ENCODE measurements at regions of chr9 and their contacts with region 1.

Region 1: GRCh38 chr9:101398068-101398929 is at the starts of genes MRPL50 and ZNF189:
- DNase-seq: peak; percentile 81 to 99 (median 96)
- ATAC-seq: peak; percentile 97
- H3K4me3 ChIP-seq: peak within 1 kb of the TSS; percentile 90
- H3K4me3 Mint-ChIP-seq: peak within 1 kb of the TSS; percentile 93 to 100 (median 98)
- H3K27ac ChIP-seq: peak within 1 kb of the TSS; percentile 94
- H3K27ac Mint-ChIP-seq: peak within 1 kb of the TSS; percentile 97 to 100 (median 99)
- H3K4me1 ChIP-seq: peaks cover 21 to 34% of the 10 kb centered on the region in 2 donors
- H3K4me1 Mint-ChIP-seq: peaks cover 53 to 90% (median 83%) of the 10 kb centered on the region in 7 donors
- H3K27me3 ChIP-seq: no peaks in the 10 kb centered on the region
- H3K27me3 Mint-ChIP-seq: no peaks in the 10 kb centered on the region
- total RNA-seq, gene MRPL50: 6.5 to 23.8 (median 11.5) TPM
- total RNA-seq, gene ZNF189: 8.5 to 25.0 (median 14.5) TPM

Region 2: DNA sequence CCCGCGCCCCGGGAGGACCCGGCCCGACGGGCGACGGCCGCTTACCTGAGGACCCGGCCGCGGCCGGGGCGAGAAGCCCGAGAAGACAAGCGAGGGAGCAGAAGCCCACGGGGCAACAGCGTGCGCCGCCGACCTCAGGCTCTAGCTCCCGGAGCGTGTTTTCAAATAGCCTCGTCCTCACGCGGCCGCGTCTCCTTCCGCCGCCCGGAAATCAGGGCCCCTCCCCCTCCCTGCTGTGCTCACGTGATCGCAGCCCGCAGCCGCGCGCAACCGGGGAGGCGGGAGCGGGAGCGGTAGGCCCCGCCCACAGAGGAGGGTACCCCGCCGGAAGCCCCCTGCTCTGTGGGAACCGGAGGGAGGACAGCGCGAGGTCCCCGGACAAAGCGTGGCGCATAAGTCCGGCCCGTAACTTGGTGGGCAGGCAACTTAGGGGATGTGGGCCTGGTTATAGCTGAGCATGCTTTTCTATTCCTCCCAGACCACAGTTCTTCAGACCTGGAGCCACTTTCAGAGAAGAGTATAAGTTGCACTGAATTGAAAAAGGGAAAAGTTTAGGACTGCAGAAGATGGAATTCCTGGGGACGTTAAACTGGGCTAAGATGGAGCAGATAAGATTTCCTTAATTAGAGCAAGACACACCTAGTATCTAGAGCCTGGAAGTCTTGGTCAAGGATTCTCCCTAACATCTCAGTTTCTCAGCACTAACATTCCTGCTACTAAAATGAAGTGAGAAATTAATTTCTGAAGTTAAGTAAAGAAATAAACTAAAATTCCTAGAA is 1045.4 kb before region 1 on chr9 and contains the start of gene TEX10:
- CTCF ChIA-PET with region 1: no interaction called
- POLR2A ChIA-PET with region 1: no interaction called
- intact Hi-C with region 1: loop called in 1 of 2 experiments (anchors 1 kb)
- DNase-seq: peak; percentile 80 to 94 (median 87)
- ATAC-seq: peak; percentile 96
- H3K4me3 ChIP-seq: peak within 1 kb of the TSS; percentile 79
- H3K4me3 Mint-ChIP-seq: peak within 1 kb of the TSS; percentile 87 to 99 (median 94)
- H3K27ac ChIP-seq: peak within 1 kb of the TSS; percentile 82
- H3K27ac Mint-ChIP-seq: peak within 1 kb of the TSS; percentile 77 to 94 (median 86)
- H3K4me1 ChIP-seq: peaks cover 8 to 22% of the 10 kb centered on the region in 2 donors
- H3K4me1 Mint-ChIP-seq: peaks cover 32 to 62% (median 53%) of the 10 kb centered on the region in 7 donors
- H3K27me3 ChIP-seq: no peaks in the 10 kb centered on the region
- H3K27me3 Mint-ChIP-seq: no peaks in the 10 kb centered on the region
- total RNA-seq, gene TEX10: 11.0 to 24.6 (median 18.2) TPM

Region 3: GRCh38 chr9:100426530-100427428 is 971.5 kb before region 1 on chr9 and contains the start of gene MSANTD3:
- CTCF ChIA-PET with region 1: no interaction called
- POLR2A ChIA-PET with region 1: no interaction called
- intact Hi-C with region 1: loop called in 1 of 2 experiments (anchors 5 kb)
- DNase-seq: peak; percentile 22 to 67 (median 44)
- ATAC-seq: peak; percentile 87
- H3K4me3 ChIP-seq: peak within 1 kb of the TSS; percentile 73
- H3K4me3 Mint-ChIP-seq: peak within 1 kb of the TSS; percentile 90 to 99 (median 96)
- H3K27ac ChIP-seq: peak within 1 kb of the TSS; percentile 68
- H3K27ac Mint-ChIP-seq: peak within 1 kb of the TSS; percentile 84 to 98 (median 93)
- H3K4me1 ChIP-seq: peaks cover 7 to 8% of the 10 kb centered on the region in 2 donors
- H3K4me1 Mint-ChIP-seq: peaks cover 22 to 48% (median 42%) of the 10 kb centered on the region in 7 donors
- H3K27me3 ChIP-seq: no peaks in the 10 kb centered on the region
- H3K27me3 Mint-ChIP-seq: peaks cover 0 to 18% (median 2%) of the 10 kb centered on the region in 5 donors
- total RNA-seq, gene MSANTD3: 6.8 to 13.4 (median 12.0) TPM

Region 4: GRCh38 chr9:100959226-100959625 is 439.1 kb before region 1 on chr9:
- CTCF ChIA-PET with region 1: no interaction called
- POLR2A ChIA-PET with region 1: no interaction called
- intact Hi-C with region 1: no loop called
- DNase-seq: no peak
- ATAC-seq: no peak
- H3K4me3 ChIP-seq: no peak overlapping the region
- H3K4me3 Mint-ChIP-seq: no peak overlapping the region
- H3K27ac ChIP-seq: no peak overlapping the region
- H3K27ac Mint-ChIP-seq: no peak overlapping the region
- H3K4me1 ChIP-seq: no peaks in the 10 kb centered on the region
- H3K4me1 Mint-ChIP-seq: no peaks in the 10 kb centered on the region
- H3K27me3 ChIP-seq: no peaks in the 10 kb centered on the region
- H3K27me3 Mint-ChIP-seq: peaks cover 0 to 5% (median 0%) of the 10 kb centered on the region in 5 donors

Region 5: GRCh38 chr9:101566904-101567724 is 168.8 kb after region 1 on chr9:
- CTCF ChIA-PET with region 1: interaction called, 3 read pairs
- POLR2A ChIA-PET with region 1: interaction called, 10 read pairs
- intact Hi-C with region 1: loop called in 1 of 2 experiments (anchors 1 kb)
- DNase-seq: peak in 6 of 9 donors; percentile 15 to 51 (median 44)
- ATAC-seq: no peak
- H3K4me3 ChIP-seq: no peak overlapping the region
- H3K4me3 Mint-ChIP-seq: peak overlapping the region in 2 of 10 donors; percentile 2 to 4
- H3K27ac ChIP-seq: no peak overlapping the region
- H3K27ac Mint-ChIP-seq: peak overlapping the region in 8 of 9 donors; percentile 22 to 98 (median 93)
- H3K4me1 ChIP-seq: peaks cover 4 to 53% of the 10 kb centered on the region in 2 donors
- H3K4me1 Mint-ChIP-seq: peaks cover 22 to 60% (median 54%) of the 10 kb centered on the region in 7 donors
- H3K27me3 ChIP-seq: no peaks in the 10 kb centered on the region
- H3K27me3 Mint-ChIP-seq: no peaks in the 10 kb centered on the region